PC-9 (cell line): ENCODE measurements at regions of chr1 and their contacts with region 1.

Region 1: DNA sequence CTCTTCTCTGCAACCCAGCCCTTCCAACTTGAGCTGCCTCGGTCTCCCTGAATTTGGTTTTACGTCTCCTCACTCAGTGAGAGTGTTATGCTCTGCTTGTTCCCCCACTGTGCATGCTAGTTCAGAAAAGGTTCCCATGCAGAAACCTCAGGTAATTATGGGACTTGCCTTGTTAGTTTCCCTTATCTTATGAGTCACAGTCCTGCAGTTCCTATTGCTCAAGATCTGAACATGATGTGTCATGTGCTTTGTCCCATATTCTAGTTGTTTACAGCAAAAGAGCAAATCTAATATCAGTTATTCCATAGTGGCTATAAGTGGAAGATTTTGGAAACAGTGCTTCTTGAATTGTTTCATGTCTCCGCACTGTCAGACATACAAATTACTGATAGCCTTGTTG is 74.4 kb downstream of the DUSP10 start:
- DNase-seq: peak; percentile 10 to 82
- H3K4me3 ChIP-seq: peak overlapping the region; percentile 19; the same call in 1 of the 2 replicates
- H3K27ac ChIP-seq: peak overlapping the region; percentile 75
- H3K4me1 ChIP-seq: peaks cover 12% of the 10 kb centered on the region
- H3K27me3 ChIP-seq: no peaks in the 10 kb centered on the region
- CTCF ChIP-seq: no peak

Region 2: GRCh38 chr1:221612264-221612777 is 55.2 kb before region 1 on chr1:
- CTCF ChIA-PET with region 1: no interaction called
- POLR2A ChIA-PET with region 1: no interaction called
- intact Hi-C with region 1: loop called (anchors 5 kb)
- DNase-seq: peak; percentile 69 to 87
- H3K4me3 ChIP-seq: peak overlapping the region; percentile 29; the same call in 1 of the 2 replicates
- H3K27ac ChIP-seq: peak overlapping the region; percentile 22; the same call in 1 of the 2 replicates
- H3K4me1 ChIP-seq: peaks cover 35% of the 10 kb centered on the region
- H3K27me3 ChIP-seq: no peaks in the 10 kb centered on the region
- CTCF ChIP-seq: no peak